CD4-positive, alpha-beta memory T cell (primary cell): ENCODE measurements at regions of chr9 and their contacts with region 1.

Region 1: DNA sequence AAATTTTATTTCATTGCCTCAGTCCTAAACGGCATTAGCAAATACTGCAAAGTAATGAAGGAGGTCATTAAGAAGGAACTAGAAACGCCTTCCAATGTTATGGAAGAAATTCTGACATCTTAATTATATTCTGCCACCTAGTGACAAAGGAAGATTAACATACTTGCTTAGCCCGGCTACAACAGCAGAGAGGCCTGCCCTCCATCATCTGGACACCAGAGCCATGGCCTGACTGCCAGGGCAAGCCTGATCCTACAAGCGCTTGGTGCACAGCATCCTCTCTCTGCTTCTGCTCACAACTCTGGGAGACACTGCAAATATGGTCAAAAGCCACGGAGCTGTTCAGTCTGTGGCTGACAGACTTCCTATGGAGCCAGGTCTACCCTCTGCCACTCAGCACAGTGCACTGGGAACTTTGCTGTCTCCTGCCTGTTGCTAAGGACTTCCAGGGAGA is 87.3 kb upstream of the SLC44A1 start:
- DNase-seq: peak; percentile 35 to 49 (median 44)
- H3K4me3 ChIP-seq: no peak overlapping the region
- H3K4me3 Mint-ChIP-seq: no peak overlapping the region
- H3K27ac ChIP-seq: no peak overlapping the region
- H3K27ac Mint-ChIP-seq: peak overlapping the region in 1 of 7 donors; percentile 35
- H3K4me1 ChIP-seq: peaks cover 10% of the 10 kb centered on the region
- H3K4me1 Mint-ChIP-seq: peaks cover 7 to 15% (median 13%) of the 10 kb centered on the region in 4 donors
- H3K27me3 ChIP-seq: no peaks in the 10 kb centered on the region
- H3K27me3 Mint-ChIP-seq: peaks cover 0 to 1% of the 10 kb centered on the region in 2 donors

Region 2: GRCh38 chr9:104808035-104808614 is 349.0 kb before region 1 on chr9:
- CTCF ChIA-PET with region 1: no interaction called
- POLR2A ChIA-PET with region 1: no interaction called
- intact Hi-C with region 1: loop called (anchors 1 kb)
- DNase-seq: no peak
- H3K4me3 ChIP-seq: no peak overlapping the region
- H3K4me3 Mint-ChIP-seq: no peak overlapping the region
- H3K27ac ChIP-seq: no peak overlapping the region
- H3K27ac Mint-ChIP-seq: no peak overlapping the region
- H3K4me1 ChIP-seq: no peaks in the 10 kb centered on the region
- H3K4me1 Mint-ChIP-seq: no peaks in the 10 kb centered on the region
- H3K27me3 ChIP-seq: no peaks in the 10 kb centered on the region
- H3K27me3 Mint-ChIP-seq: no peaks in the 10 kb centered on the region

Region 3: GRCh38 chr9:104927912-104928740 is 229.0 kb before region 1 on chr9 and contains the start of gene ABCA1:
- CTCF ChIA-PET with region 1: interaction called, 28 read pairs
- POLR2A ChIA-PET with region 1: no interaction called
- intact Hi-C with region 1: loop called (anchors 1 kb)
- DNase-seq: peak; percentile 56 to 83 (median 65)
- H3K4me3 ChIP-seq: peak within 1 kb of the TSS; percentile 62 to 69
- H3K4me3 Mint-ChIP-seq: peak within 1 kb of the TSS; percentile 90 to 94 (median 91)
- H3K27ac ChIP-seq: no peak within 1 kb of the TSS
- H3K27ac Mint-ChIP-seq: peak within 1 kb of the TSS in 6 of 7 donors; percentile 60 to 92 (median 80)
- H3K4me1 ChIP-seq: peaks cover 23% of the 10 kb centered on the region
- H3K4me1 Mint-ChIP-seq: peaks cover 4 to 19% (median 10%) of the 10 kb centered on the region in 4 donors
- H3K27me3 ChIP-seq: no peaks in the 10 kb centered on the region
- H3K27me3 Mint-ChIP-seq: peaks cover 0 to 14% of the 10 kb centered on the region in 2 donors
- total RNA-seq, gene ABCA1: 0.80 to 1.2 TPM

Region 4: GRCh38 chr9:104991144-104991953 is 165.8 kb before region 1 on chr9:
- CTCF ChIA-PET with region 1: no interaction called
- POLR2A ChIA-PET with region 1: no interaction called
- intact Hi-C with region 1: loop called (anchors 5 kb)
- DNase-seq: peak; percentile 85 to 88 (median 88)
- H3K4me3 ChIP-seq: peak overlapping the region; percentile 94 to 98
- H3K4me3 Mint-ChIP-seq: peak overlapping the region; percentile 87 to 94 (median 92)
- H3K27ac ChIP-seq: peak overlapping the region; percentile 76
- H3K27ac Mint-ChIP-seq: peak overlapping the region; percentile 96 to 99 (median 98)
- H3K4me1 ChIP-seq: peaks cover 38% of the 10 kb centered on the region
- H3K4me1 Mint-ChIP-seq: peaks cover 21 to 45% (median 33%) of the 10 kb centered on the region in 4 donors
- H3K27me3 ChIP-seq: no peaks in the 10 kb centered on the region
- H3K27me3 Mint-ChIP-seq: peaks cover 0 to 1% of the 10 kb centered on the region in 2 donors

Region 5: GRCh38 chr9:105216440-105217178 is 59.5 kb after region 1 on chr9:
- CTCF ChIA-PET with region 1: no interaction called
- POLR2A ChIA-PET with region 1: no interaction called
- intact Hi-C with region 1: no loop called
- DNase-seq: no peak
- H3K4me3 ChIP-seq: no peak overlapping the region
- H3K4me3 Mint-ChIP-seq: no peak overlapping the region
- H3K27ac ChIP-seq: no peak overlapping the region
- H3K27ac Mint-ChIP-seq: no peak overlapping the region
- H3K4me1 ChIP-seq: no peaks in the 10 kb centered on the region
- H3K4me1 Mint-ChIP-seq: no peaks in the 10 kb centered on the region
- H3K27me3 ChIP-seq: no peaks in the 10 kb centered on the region
- H3K27me3 Mint-ChIP-seq: peaks cover 4% of the 10 kb centered on the region in 2 donors

Region 6: DNA sequence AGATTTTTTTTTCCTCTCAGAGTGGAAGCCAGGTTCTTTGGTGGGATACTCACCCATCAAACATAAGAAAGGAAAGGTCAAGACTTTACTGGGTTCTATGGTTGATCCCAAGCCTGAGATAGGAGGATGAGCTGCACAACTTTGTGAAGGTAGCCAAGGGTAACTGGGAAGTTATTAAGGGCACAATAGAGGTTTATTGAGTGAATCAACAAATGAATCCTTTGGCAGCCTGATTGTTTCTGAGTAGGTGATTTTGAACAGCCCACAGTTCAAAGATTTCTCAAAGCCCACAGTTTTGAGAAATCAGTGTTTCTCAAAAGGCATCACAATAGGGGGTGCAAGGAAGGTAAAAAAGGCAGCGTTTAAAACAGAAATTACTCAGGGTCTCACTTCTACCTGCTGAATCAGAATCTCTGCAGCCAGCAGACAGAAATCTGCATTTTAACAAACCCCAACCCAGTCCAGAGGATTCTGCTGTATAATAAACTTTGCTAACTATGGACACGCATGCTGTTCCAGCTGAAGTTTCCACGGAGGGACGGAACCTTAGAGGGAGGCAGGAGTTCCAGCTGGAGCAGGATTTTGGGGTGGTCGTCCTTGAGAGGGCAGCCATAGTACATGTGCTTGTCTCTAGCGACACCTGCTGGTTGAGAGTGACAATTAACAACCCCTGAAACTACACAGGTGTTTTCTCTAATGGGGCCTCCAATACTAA is 257.9 kb after region 1 on chr9:
- CTCF ChIA-PET with region 1: interaction called, 10 read pairs
- POLR2A ChIA-PET with region 1: no interaction called
- intact Hi-C with region 1: loop called (anchors 1 kb)
- DNase-seq: peak; percentile 51 to 64 (median 58)
- H3K4me3 ChIP-seq: no peak overlapping the region
- H3K4me3 Mint-ChIP-seq: no peak overlapping the region
- H3K27ac ChIP-seq: no peak overlapping the region
- H3K27ac Mint-ChIP-seq: no peak overlapping the region
- H3K4me1 ChIP-seq: no peaks in the 10 kb centered on the region
- H3K4me1 Mint-ChIP-seq: no peaks in the 10 kb centered on the region
- H3K27me3 ChIP-seq: peaks cover 6% of the 10 kb centered on the region
- H3K27me3 Mint-ChIP-seq: peaks cover 29 to 33% of the 10 kb centered on the region in 2 donors

Region 7: DNA sequence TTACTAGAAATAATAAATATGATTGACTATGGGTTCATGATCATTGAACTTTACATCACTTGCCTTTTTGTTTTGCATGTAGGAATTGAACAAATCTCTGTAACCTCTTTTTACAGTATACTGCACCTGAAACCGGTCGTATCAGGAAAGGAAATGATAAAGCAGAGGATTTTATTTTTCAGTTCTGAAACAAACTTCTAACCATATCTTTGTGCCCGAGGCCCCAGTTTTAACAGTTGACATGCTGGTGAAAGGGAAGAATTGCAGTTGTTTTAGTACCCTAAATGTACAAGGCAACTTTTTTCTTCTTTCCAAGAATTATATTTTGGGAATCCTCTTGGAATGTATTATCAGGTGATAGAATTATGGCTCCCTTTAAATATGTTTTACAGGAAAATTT is 564.9 kb after region 1 on chr9:
- CTCF ChIA-PET with region 1: no interaction called
- POLR2A ChIA-PET with region 1: no interaction called
- intact Hi-C with region 1: no loop called
- DNase-seq: no peak
- H3K4me3 ChIP-seq: no peak overlapping the region
- H3K4me3 Mint-ChIP-seq: no peak overlapping the region
- H3K27ac ChIP-seq: no peak overlapping the region
- H3K27ac Mint-ChIP-seq: no peak overlapping the region
- H3K4me1 ChIP-seq: no peaks in the 10 kb centered on the region
- H3K4me1 Mint-ChIP-seq: no peaks in the 10 kb centered on the region
- H3K27me3 ChIP-seq: no peaks in the 10 kb centered on the region
- H3K27me3 Mint-ChIP-seq: no peaks in the 10 kb centered on the region